Activated T-helper 2 cell treated with anti-CD3 and anti-CD28 coated beads, Interferon-gamma antibody, Interleukin-2, Interleukin-4, amounts not matched to agents 10 μg/mL and 5 μg/mL and 100 μg/mL, durations not matched to agents 14 hours and 24 hours and 36 hours (primary cell): ENCODE measurements at regions of chr15 and their contacts with region 1.

Region 1: DNA sequence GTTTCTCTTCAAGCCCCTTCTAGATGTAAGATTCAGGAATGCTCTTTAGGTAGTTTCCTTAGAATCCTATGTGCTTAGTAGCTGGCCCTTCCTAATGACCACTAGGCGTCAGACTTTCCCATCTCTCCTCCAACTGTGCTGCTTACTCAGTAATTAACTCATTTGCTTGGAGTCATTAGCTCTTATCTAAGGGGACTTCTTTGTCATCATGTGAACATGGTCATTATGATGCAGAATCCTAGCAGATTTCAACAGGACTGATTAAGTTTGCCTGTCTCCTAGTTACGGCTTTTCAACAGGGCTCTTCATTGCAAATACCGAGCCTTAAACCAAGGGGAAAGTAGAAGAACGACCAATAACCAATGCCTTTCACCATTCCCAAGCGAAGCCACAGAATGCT is 46.4 kb downstream of the GJD2 start:
- DNase-seq: no peak
- H3K4me3 Mint-ChIP-seq: no peak overlapping the region
- H3K27ac Mint-ChIP-seq: no peak overlapping the region
- H3K4me1 Mint-ChIP-seq: no peaks in the 10 kb centered on the region
- H3K27me3 Mint-ChIP-seq: peaks cover 22% of the 10 kb centered on the region

Region 2: GRCh38 chr15:34679291-34679690 is 29.1 kb before region 1 on chr15:
- intact Hi-C with region 1: no loop called
- DNase-seq: no peak
- H3K4me3 Mint-ChIP-seq: no peak overlapping the region
- H3K27ac Mint-ChIP-seq: no peak overlapping the region
- H3K4me1 Mint-ChIP-seq: no peaks in the 10 kb centered on the region
- H3K27me3 Mint-ChIP-seq: peaks cover 13% of the 10 kb centered on the region

Region 3: GRCh38 chr15:34810455-34811146 is 102.2 kb after region 1 on chr15:
- intact Hi-C with region 1: no loop called
- DNase-seq: no peak
- H3K4me3 Mint-ChIP-seq: no peak overlapping the region
- H3K27ac Mint-ChIP-seq: no peak overlapping the region
- H3K4me1 Mint-ChIP-seq: no peaks in the 10 kb centered on the region
- H3K27me3 Mint-ChIP-seq: peaks cover 14% of the 10 kb centered on the region

Region 4: DNA sequence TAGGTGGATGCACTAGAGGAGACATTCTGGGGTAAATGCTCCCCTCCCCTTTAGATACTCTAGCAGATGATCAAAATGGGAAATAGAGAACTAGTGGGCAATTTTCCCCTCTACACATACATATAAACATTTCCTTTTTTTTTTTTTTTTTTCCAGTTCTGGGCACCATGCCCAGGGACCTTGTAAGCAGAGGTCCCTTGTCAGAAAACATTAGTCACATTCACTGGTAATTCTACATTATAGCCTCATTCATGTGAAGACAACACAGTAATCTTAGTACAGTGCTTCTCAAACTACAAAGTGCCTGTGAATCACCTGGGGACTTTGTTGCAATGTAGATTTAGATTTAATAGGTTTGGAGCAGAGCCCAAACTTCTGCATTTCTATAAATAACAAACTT is 147.0 kb after region 1 on chr15:
- intact Hi-C with region 1: no loop called
- DNase-seq: no peak
- H3K4me3 Mint-ChIP-seq: no peak overlapping the region
- H3K27ac Mint-ChIP-seq: no peak overlapping the region
- H3K4me1 Mint-ChIP-seq: no peaks in the 10 kb centered on the region
- H3K27me3 Mint-ChIP-seq: no peaks in the 10 kb centered on the region

Region 5: DNA sequence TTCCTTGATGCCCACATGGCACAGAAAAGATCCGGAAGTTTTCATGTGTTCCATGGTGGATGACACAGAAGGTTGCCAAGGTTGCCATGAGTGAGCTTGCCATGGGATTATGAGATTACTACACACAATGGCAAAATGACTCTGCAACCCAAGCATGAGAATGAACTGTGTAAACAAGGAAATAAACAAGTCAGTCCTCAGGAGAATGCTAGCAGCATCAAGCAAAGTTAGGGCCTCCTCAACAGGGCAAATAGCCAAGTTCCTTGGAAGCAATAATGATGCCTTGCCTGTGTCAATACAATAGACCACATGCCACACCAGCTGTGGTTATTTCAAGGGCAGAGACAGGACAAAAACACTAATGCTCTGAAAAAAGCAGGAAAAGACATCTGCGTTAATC is 219.3 kb after region 1 on chr15:
- intact Hi-C with region 1: loop called (anchors 5 kb)
- DNase-seq: no peak
- H3K4me3 Mint-ChIP-seq: no peak overlapping the region
- H3K27ac Mint-ChIP-seq: no peak overlapping the region
- H3K4me1 Mint-ChIP-seq: no peaks in the 10 kb centered on the region
- H3K27me3 Mint-ChIP-seq: no peaks in the 10 kb centered on the region